ENCODE measurements at regions of chr3 and their contacts with region 1.

Region 1: GRCh38 chr3:188052169-188053030 is 101.6 kb upstream of the LPP start:
- DNase-seq: peak; percentile 81 to 89
- ATAC-seq: peak; percentile 96 to 98 (median 97)
- H3K4me3 ChIP-seq: peak overlapping the region in 6 of 10 donors; percentile 3 to 34 (median 23)
- H3K27ac ChIP-seq: peak overlapping the region; percentile 66 to 89 (median 76)
- H3K4me1 ChIP-seq: peaks cover 6 to 34% (median 21%) of the 10 kb centered on the region in 9 donors
- H3K27me3 ChIP-seq: no peaks in the 10 kb centered on the region
- CTCF ChIP-seq: peak in 8 of 9 donors; percentile 26 to 77 (median 56)

Region 2: DNA sequence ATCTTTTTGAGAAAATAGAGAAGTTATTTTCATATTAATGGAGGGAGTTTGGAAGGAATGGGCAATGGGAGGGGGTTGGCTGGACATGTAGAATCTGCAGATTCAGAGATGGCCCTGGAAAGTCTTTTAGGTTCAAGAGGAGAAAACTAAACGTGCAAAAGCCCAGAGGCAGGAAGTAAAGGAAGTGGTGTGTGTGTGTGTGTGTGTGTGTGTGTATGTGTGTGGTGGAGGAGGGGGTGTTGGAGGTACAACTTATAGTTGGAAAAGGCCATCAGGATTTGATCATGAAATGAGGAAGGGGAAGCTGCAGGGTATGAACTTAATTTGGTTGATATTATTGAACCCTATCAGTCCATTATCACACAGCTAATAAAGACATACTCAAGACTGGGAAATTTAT is 95.9 kb after region 1 on chr3:
- intact Hi-C with region 1: loop called in 3 of 10 experiments (anchors 5 to 10 kb)
- DNase-seq: no peak
- ATAC-seq: no peak
- H3K4me3 ChIP-seq: no peak overlapping the region
- H3K27ac ChIP-seq: no peak overlapping the region
- H3K4me1 ChIP-seq: peaks cover 0 to 22% (median 10%) of the 10 kb centered on the region in 9 donors
- H3K27me3 ChIP-seq: no peaks in the 10 kb centered on the region
- CTCF ChIP-seq: no peak

Region 3: GRCh38 chr3:188270423-188270972 is 218.1 kb after region 1 on chr3:
- intact Hi-C with region 1: loop called in 2 of 10 experiments (anchors 10 kb)
- DNase-seq: no peak
- ATAC-seq: peak in 5 of 8 donors; percentile 23 to 54 (median 46)
- H3K4me3 ChIP-seq: peak overlapping the region in 1 of 10 donors; percentile 1
- H3K27ac ChIP-seq: peak overlapping the region; percentile 45 to 93 (median 74)
- H3K4me1 ChIP-seq: peaks cover 14 to 92% (median 71%) of the 10 kb centered on the region in 9 donors
- H3K27me3 ChIP-seq: no peaks in the 10 kb centered on the region
- CTCF ChIP-seq: no peak

Region 4: DNA sequence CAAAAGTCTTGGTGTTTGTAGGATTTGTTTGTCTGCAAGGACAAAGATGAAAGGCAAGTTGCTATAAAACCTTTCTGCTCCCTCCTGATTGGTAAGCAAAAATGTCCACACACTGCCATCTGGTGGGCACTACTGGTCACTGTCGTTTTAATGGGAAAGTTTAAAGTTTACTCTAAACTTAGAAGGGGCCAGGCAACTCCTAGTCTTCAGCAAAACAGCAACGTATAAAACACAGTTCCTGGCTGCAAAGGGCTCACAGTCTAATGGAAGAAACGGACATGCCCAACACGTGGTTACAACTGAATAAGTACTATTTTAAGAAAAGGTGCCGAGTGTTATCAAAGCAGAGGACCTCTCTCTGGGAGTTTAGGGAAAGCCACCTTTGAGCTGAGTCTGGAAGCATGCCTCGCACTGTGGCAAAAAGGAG is 1095.7 kb after region 1 on chr3:
- intact Hi-C with region 1: loop called in 1 of 10 experiments (anchors 10 kb)
- DNase-seq: peak; percentile 23 to 68
- ATAC-seq: peak; percentile 56 to 79 (median 70)
- H3K4me3 ChIP-seq: no peak overlapping the region
- H3K27ac ChIP-seq: peak overlapping the region in 2 of 10 donors; percentile 11 to 46
- H3K4me1 ChIP-seq: peaks cover 0 to 32% (median 7%) of the 10 kb centered on the region in 9 donors
- H3K27me3 ChIP-seq: no peaks in the 10 kb centered on the region
- CTCF ChIP-seq: peak; percentile 68 to 85 (median 78)

Measured in heart right ventricle (tissue), 16 donors.